ENCODE measurements at regions of chr12 and their contacts with region 1.

Region 1: DNA sequence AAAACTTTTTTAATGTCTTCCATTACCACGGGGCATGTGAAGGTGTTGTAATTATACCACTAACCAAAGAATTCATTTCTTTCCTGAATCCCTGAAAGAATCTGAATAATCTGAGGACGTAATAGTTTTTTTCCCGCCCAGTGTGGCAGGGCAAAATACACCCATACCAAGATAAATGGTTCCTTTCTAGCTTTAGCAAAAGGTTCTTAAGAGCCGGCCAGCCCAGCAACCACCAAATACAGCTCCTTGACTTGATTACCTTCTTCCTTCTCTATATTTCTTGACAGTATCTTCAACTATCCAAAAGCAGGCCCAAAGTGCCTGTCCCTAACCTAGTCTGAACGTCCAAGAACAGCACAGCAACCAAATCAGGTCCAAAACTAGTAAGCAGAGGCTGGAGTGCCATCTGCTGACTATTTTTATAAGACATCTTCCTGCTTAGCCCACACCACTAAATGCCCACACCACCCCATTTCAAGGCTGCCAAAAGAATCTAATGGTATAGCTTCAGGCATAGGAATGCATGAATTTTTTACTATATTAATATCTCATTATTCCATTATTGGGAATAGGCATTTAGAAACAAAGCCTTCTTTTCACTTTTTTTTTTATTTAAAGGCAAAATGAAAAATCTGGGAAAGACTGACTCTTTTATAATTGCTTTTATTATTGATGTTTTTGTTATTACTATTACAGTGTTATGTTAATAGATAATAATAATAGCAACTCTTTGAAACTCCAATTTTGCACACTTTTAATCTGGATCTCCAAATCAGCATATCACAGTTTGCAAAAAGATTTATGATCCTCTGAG is 524.4 kb downstream of the MED13L start:
- DNase-seq: peak in 1 of 2 donors; percentile 59
- ATAC-seq: peak; percentile 81 to 96 (median 94)
- H3K4me3 ChIP-seq: no peak overlapping the region
- H3K27ac ChIP-seq: peak overlapping the region in 2 of 10 donors; percentile 1 to 9
- H3K4me1 ChIP-seq: peaks cover 0 to 34% (median 16%) of the 10 kb centered on the region in 9 donors
- H3K27me3 ChIP-seq: peaks cover 0 to 46% (median 29%) of the 10 kb centered on the region in 7 donors
- CTCF ChIP-seq: peak; percentile 49 to 81 (median 72)

Region 2: GRCh38 chr12:114668151-114668885 is 1084.8 kb before region 1 on chr12:
- intact Hi-C with region 1: loop called (anchors 1 to 5 kb)
- DNase-seq: peak; percentile 78 to 81
- ATAC-seq: peak; percentile 88 to 94 (median 92)
- H3K4me3 ChIP-seq: peak overlapping the region in 9 of 10 donors; percentile 33 to 54 (median 50)
- H3K27ac ChIP-seq: peak overlapping the region in 6 of 10 donors; percentile 22 to 48 (median 31)
- H3K4me1 ChIP-seq: peaks cover 2 to 43% (median 18%) of the 10 kb centered on the region in 9 donors
- H3K27me3 ChIP-seq: peaks cover 6 to 100% (median 51%) of the 10 kb centered on the region in 7 donors
- CTCF ChIP-seq: peak; percentile 39 to 79 (median 65)

Region 3: DNA sequence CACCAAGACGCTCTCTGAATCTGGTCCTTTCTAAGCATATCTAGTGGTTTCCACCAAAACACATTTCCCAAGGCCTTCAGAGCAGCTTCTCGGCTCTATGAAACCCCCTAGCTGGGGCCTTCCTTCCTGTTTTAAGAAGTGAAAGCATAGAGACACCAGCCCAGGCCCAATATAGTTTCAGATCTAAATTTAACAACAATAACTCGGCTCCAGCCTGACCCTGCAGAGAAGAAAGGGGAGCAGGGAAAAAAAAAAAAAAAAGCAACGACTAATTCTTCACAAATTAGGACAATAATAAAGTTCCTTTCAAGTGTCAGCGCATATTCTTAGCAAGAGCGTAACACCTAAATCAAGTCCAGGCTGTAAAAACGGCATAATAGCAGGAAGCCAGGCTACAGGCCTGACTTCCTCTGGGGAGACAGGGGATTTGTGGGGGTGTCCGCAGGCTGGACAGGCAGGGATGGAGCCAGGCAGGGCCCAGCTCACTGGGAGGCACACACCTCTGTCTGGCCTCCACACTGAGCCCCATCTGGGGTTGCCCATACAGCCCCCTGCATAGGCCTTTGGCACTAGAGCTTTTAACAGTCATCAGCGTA is 248.7 kb before region 1 on chr12:
- intact Hi-C with region 1: loop called in 1 of 10 experiments (anchors 5 kb)
- DNase-seq: peak; percentile 19 to 55
- ATAC-seq: peak; percentile 65 to 91 (median 82)
- H3K4me3 ChIP-seq: no peak overlapping the region
- H3K27ac ChIP-seq: peak overlapping the region; percentile 16 to 82 (median 74)
- H3K4me1 ChIP-seq: peaks cover 0 to 57% (median 17%) of the 10 kb centered on the region in 9 donors
- H3K27me3 ChIP-seq: no peaks in the 10 kb centered on the region
- CTCF ChIP-seq: no peak

Region 4: GRCh38 chr12:115660211-115660805 is 92.8 kb before region 1 on chr12:
- intact Hi-C with region 1: loop called in 2 of 10 experiments (anchors 2 to 10 kb)
- DNase-seq: peak; percentile 21 to 73
- ATAC-seq: peak; percentile 72 to 96 (median 92)
- H3K4me3 ChIP-seq: no peak overlapping the region
- H3K27ac ChIP-seq: peak overlapping the region in 9 of 10 donors; percentile 36 to 77 (median 56)
- H3K4me1 ChIP-seq: peaks cover 0 to 32% (median 17%) of the 10 kb centered on the region in 9 donors
- H3K27me3 ChIP-seq: peaks cover 0 to 10% (median 0%) of the 10 kb centered on the region in 7 donors
- CTCF ChIP-seq: no peak